ENCODE measurements at regions of chr15 and their contacts with region 1.

Region 1: GRCh38 chr15:39756806-39757522 is 25.7 kb downstream of the FSIP1 start:
- DNase-seq: peak; percentile 7 to 35
- H3K4me3 ChIP-seq: no peak overlapping the region
- H3K27ac ChIP-seq: no peak overlapping the region
- H3K4me1 ChIP-seq: no peaks in the 10 kb centered on the region
- H3K27me3 ChIP-seq: no peaks in the 10 kb centered on the region
- CTCF ChIP-seq: peak; percentile 76

Region 2: DNA sequence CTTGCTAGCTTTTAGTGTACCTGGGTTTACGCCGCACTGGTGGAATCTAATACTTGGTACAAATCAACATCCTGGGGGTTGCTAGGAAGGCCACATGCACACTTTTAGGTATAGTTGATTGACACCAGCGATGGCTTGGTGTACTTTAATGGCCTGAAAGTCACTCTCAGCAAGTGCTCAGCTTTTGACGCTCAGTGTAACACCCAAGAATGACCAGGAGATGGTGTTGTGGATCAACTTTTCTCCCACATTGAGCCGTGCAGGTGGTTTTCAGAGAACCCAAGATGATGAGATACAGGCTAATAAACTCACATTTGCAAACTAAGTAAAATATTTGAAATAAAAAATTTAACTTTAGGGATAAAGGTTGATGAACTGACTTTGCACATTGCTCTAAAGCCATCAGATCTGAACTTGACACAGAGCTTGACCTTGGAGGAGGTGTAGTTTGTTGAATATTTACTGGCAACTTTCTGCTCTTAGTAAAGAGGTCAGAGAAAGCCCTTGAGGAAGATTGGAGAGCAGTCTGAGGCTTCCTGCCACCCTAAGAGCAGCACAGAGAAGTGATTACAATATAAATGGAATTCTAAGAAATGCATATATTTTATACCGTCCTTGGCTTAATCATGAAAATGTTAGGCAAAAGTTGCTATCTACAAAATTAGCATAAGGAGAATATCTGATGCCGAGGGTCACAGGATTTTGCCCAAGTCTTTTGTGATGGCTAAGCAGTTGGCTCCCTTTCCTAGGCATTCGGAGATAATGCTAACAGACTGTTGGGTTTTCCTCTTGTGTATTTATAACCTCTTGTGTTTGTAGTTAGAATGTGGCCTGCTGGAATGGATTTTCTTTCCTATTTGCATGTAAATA is 1048.9 kb before region 1 on chr15:
- CTCF ChIA-PET with region 1: interaction called, 4 read pairs
- POLR2A ChIA-PET with region 1: no interaction called
- intact Hi-C with region 1: loop called (anchors 2 kb)
- DNase-seq: peak in 1 of 2 experiments; percentile 43
- H3K4me3 ChIP-seq: no peak overlapping the region
- H3K27ac ChIP-seq: no peak overlapping the region
- H3K4me1 ChIP-seq: peaks cover 3% of the 10 kb centered on the region
- H3K27me3 ChIP-seq: no peaks in the 10 kb centered on the region
- CTCF ChIP-seq: peak; percentile 77

Region 3: GRCh38 chr15:39376371-39376909 is 380.5 kb before region 1 on chr15:
- CTCF ChIA-PET with region 1: no interaction called
- POLR2A ChIA-PET with region 1: no interaction called
- intact Hi-C with region 1: no loop called
- DNase-seq: peak in 1 of 2 experiments; percentile 55
- H3K4me3 ChIP-seq: no peak overlapping the region
- H3K27ac ChIP-seq: no peak overlapping the region
- H3K4me1 ChIP-seq: no peaks in the 10 kb centered on the region
- H3K27me3 ChIP-seq: no peaks in the 10 kb centered on the region
- CTCF ChIP-seq: no peak

Region 4: DNA sequence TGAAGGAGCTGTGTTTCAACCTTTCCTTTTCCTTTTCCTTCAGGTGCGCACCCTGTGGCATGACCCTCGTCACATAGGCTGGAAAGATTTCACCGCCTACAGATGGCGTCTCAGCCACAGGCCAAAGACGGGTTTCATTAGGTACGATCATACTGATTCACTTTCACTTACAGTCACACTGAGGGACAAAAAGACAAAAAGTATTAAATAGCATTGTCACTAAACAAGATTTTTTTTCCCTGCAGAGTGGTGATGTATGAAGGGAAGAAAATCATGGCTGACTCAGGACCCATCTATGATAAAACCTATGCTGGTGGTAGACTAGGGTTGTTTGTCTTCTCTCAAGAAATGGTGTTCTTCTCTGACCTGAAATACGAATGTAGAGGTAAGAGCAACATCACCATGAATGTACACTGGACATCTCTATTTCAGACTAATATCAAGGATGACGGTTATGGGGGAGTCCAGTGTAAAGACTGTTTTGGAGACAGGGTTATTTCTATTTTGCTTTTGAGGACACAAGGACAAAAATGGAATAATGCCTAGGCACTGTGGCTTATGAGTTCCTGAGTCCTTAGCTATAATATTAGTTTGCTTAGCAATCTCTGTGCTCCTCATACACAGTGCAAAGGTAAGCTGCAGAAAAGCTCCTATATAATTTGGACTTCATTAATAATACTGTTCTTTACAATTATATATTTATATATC is 162.8 kb before region 1 on chr15:
- CTCF ChIA-PET with region 1: interaction called, 3 read pairs
- POLR2A ChIA-PET with region 1: no interaction called
- intact Hi-C with region 1: loop called (anchors 5 kb)
- DNase-seq: no peak
- H3K4me3 ChIP-seq: no peak overlapping the region
- H3K27ac ChIP-seq: no peak overlapping the region
- H3K4me1 ChIP-seq: no peaks in the 10 kb centered on the region
- H3K27me3 ChIP-seq: no peaks in the 10 kb centered on the region
- CTCF ChIP-seq: no peak

Region 5: GRCh38 chr15:39686000-39686613 is 70.9 kb before region 1 on chr15:
- CTCF ChIA-PET with region 1: interaction called, 10 read pairs
- POLR2A ChIA-PET with region 1: interaction called, 3 read pairs
- intact Hi-C with region 1: loop called (anchors 1 kb)
- DNase-seq: peak in 1 of 2 experiments; percentile 34
- H3K4me3 ChIP-seq: no peak overlapping the region
- H3K27ac ChIP-seq: no peak overlapping the region
- H3K4me1 ChIP-seq: no peaks in the 10 kb centered on the region
- H3K27me3 ChIP-seq: no peaks in the 10 kb centered on the region
- CTCF ChIP-seq: peak; percentile 82

Region 6: DNA sequence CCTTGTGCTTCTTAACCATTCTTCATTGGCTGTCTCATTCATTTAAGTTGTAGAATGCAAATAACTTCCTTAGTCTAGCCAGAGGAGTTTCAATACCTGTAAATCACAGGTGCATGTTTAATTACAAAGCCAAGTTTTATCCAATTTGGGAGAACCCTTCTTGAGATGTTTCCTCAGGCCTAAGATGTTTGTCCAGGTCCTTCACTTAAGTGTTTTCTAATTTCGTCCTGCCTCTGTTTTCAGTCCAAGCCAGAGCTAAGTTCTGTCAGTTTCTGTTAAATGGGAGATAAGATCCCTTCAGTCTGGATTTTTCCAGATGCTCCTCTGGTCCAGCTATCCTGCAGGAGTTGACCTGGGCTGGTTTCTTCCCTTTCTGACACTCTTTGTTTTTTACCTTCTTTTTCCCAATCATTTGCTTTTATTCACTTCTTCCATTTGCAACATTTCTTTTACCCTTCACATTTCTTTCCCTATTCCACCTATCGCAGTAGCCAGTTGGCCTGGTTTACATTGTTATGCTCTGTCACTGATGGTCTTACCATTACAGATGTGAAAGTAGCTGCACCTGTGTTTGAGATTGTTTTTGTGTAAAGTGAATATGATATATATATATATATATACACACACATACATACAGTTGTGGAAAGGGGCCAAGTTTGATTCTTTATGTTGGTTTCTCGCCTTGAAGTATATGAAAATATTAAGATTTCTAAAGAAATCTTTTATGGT is 211.5 kb after region 1 on chr15:
- CTCF ChIA-PET with region 1: interaction called, 15 read pairs
- POLR2A ChIA-PET with region 1: no interaction called
- intact Hi-C with region 1: no loop called
- DNase-seq: no peak
- H3K4me3 ChIP-seq: no peak overlapping the region
- H3K27ac ChIP-seq: no peak overlapping the region
- H3K4me1 ChIP-seq: peaks cover 9% of the 10 kb centered on the region; the same call in 1 of the 2 replicates
- H3K27me3 ChIP-seq: no peaks in the 10 kb centered on the region
- CTCF ChIP-seq: no peak